ENCODE measurements at regions of chr4 and their contacts with region 1.

Region 1: DNA sequence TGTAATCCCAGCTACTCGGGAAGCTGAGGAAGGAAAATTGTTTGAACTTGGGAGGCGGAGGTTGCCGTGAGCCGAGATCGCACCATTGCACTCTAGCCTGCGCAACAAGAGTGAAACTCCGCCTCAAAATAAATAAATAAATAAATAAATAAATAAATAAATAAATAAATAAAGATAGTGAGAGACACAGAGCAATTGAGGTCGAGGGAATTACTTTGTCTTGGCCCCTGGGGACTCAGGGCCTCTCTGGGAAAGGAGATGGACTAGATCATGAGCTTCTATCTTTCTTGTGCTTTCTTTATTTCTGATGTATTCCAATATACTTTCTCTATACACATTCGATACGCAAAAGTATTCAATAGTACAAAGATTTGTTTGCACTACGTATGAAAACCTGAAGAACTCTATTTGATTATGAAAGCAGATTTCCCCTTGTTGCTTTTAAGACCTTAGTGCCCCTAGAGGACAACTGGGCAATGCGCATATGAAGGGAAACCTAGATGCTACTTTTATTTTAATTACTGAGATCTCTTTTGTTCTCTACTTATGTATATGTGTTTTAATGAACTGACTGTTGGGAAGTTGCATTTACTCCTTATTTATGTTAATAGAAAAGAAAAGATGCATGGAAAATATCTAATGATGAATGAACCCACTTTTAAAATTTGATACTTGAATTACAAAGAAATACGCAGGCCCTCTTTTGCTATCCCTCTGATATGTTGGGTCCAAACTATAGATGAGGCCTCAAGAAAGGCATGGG is 12.8 kb upstream of the ELOVL6 start:
- DNase-seq: peak in 2 of 5 donors; percentile 35 to 46
- H3K4me3 ChIP-seq: no peak overlapping the region
- H3K4me3 Mint-ChIP-seq: peak overlapping the region in 3 of 7 donors; percentile 26 to 55 (median 37)
- H3K27ac ChIP-seq: no peak overlapping the region
- H3K27ac Mint-ChIP-seq: peak overlapping the region in 2 of 8 donors; percentile 68 to 73
- H3K4me1 ChIP-seq: no peaks in the 10 kb centered on the region
- H3K4me1 Mint-ChIP-seq: peaks cover 3 to 4% (median 3%) of the 10 kb centered on the region in 3 donors
- H3K27me3 ChIP-seq: no peaks in the 10 kb centered on the region
- H3K27me3 Mint-ChIP-seq: peaks cover 0 to 2% of the 10 kb centered on the region in 2 donors

Region 2: DNA sequence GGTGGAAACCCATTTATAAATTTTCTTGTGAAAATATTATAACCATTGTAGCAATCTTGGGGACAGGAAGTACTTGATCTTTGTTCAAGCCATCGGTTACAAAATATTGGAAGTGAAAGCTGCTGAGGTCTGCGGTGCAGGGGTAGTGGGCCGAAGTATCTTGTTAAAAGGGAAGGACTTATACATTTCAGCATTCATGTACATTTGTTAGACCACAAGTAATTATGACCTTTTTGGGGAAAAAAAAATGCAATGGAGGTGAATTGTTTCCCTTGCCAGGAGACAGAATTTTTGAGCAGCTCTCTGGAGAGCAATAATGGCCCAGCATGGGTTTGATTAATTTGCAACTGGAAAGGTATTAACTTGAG is 177.2 kb before region 1 on chr4:
- CTCF ChIA-PET with region 1: no interaction called
- POLR2A ChIA-PET with region 1: no interaction called
- DNase-seq: no peak
- H3K4me3 ChIP-seq: no peak overlapping the region
- H3K4me3 Mint-ChIP-seq: no peak overlapping the region
- H3K27ac ChIP-seq: no peak overlapping the region
- H3K27ac Mint-ChIP-seq: no peak overlapping the region
- H3K4me1 ChIP-seq: no peaks in the 10 kb centered on the region
- H3K4me1 Mint-ChIP-seq: peaks cover 0 to 4% (median 0%) of the 10 kb centered on the region in 3 donors
- H3K27me3 ChIP-seq: no peaks in the 10 kb centered on the region
- H3K27me3 Mint-ChIP-seq: peaks cover 21 to 54% of the 10 kb centered on the region in 2 donors

Region 3: GRCh38 chr4:110049951-110050925 is 160.9 kb before region 1 on chr4:
- CTCF ChIA-PET with region 1: interaction called, 14 read pairs
- POLR2A ChIA-PET with region 1: no interaction called
- DNase-seq: peak; percentile 11 to 51 (median 42)
- H3K4me3 ChIP-seq: no peak overlapping the region
- H3K4me3 Mint-ChIP-seq: no peak overlapping the region
- H3K27ac ChIP-seq: no peak overlapping the region
- H3K27ac Mint-ChIP-seq: peak overlapping the region in 2 of 8 donors; percentile 50 to 77
- H3K4me1 ChIP-seq: no peaks in the 10 kb centered on the region
- H3K4me1 Mint-ChIP-seq: peaks cover under 1 to 1% (median 1%) of the 10 kb centered on the region in 3 donors
- H3K27me3 ChIP-seq: no peaks in the 10 kb centered on the region
- H3K27me3 Mint-ChIP-seq: no peaks in the 10 kb centered on the region

Region 4: GRCh38 chr4:110245577-110245976 is 34.4 kb after region 1 on chr4:
- CTCF ChIA-PET with region 1: no interaction called
- POLR2A ChIA-PET with region 1: no interaction called
- DNase-seq: no peak
- H3K4me3 ChIP-seq: no peak overlapping the region
- H3K4me3 Mint-ChIP-seq: no peak overlapping the region
- H3K27ac ChIP-seq: no peak overlapping the region
- H3K27ac Mint-ChIP-seq: no peak overlapping the region
- H3K4me1 ChIP-seq: no peaks in the 10 kb centered on the region
- H3K4me1 Mint-ChIP-seq: no peaks in the 10 kb centered on the region
- H3K27me3 ChIP-seq: no peaks in the 10 kb centered on the region
- H3K27me3 Mint-ChIP-seq: peaks cover 0 to 3% of the 10 kb centered on the region in 2 donors

Region 5: DNA sequence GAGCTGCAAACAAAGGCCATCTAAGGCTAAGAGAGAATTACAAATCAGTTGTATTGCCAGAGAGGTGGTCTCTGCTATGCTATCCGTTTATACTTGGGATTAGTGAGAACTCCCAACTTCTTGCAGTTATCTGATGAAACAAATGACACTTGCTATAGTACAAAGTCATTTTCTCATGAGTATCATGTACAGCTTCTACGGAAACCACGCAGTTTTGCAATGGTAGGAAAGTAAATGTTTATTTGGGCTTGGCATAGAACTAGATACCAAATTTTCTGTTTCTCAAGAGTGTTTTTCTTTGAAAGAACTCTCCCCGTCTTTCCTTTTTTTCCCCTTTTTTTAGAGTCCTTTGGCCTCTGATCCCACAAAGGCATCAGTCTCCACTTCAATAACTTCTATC is 136.6 kb after region 1 on chr4:
- CTCF ChIA-PET with region 1: no interaction called
- POLR2A ChIA-PET with region 1: no interaction called
- DNase-seq: no peak
- H3K4me3 ChIP-seq: no peak overlapping the region
- H3K4me3 Mint-ChIP-seq: no peak overlapping the region
- H3K27ac ChIP-seq: no peak overlapping the region
- H3K27ac Mint-ChIP-seq: no peak overlapping the region
- H3K4me1 ChIP-seq: no peaks in the 10 kb centered on the region
- H3K4me1 Mint-ChIP-seq: no peaks in the 10 kb centered on the region
- H3K27me3 ChIP-seq: no peaks in the 10 kb centered on the region
- H3K27me3 Mint-ChIP-seq: peaks cover 1 to 11% of the 10 kb centered on the region in 2 donors